GM18951 (cell line): ENCODE measurements at regions of chr3 and their contacts with region 1.

Region 1: GRCh38 chr3:119676771-119677640 is at the start of gene COX17:
- POLR2A ChIP-seq: peak; percentile 74

Region 2: GRCh38 chr3:118884748-118885206 is 792.2 kb before region 1 on chr3:
- in situ Hi-C with region 1: loop called (anchors 25 kb)
- POLR2A ChIP-seq: no peak

Region 3: GRCh38 chr3:119145500-119146191 is 531.4 kb before region 1 on chr3 and contains the start of gene TEX55:
- in situ Hi-C with region 1: loop called (anchors 25 kb)
- POLR2A ChIP-seq: no peak

Region 4: GRCh38 chr3:119293871-119294695 is 382.9 kb before region 1 on chr3 and contains the start of gene ARHGAP31:
- in situ Hi-C with region 1: loop called (anchors 25 kb)
- POLR2A ChIP-seq: peak; percentile 65